Sigmoid colon (tissue), 7 donors: ENCODE measurements at regions of chr9 and their contacts with region 1.

Region 1: DNA sequence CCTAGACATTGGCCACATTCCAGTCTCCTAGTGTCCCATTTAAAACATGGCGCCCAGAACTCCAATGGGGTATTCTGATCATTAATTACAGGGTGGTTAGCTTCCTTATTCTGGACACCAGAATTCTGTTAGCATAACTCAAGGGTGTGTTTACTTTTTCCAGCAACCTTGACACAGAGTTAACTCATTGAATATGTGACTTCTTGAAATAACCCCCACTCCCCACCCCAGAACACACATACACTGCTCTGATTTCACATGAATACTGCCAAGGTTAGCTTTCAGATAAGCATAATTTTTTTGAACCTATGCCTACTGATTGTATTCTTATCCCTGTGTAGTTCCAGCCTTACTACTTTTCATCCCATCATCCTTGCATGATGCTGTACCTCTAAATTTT is 151.1 kb downstream of the SMARCA2 start:
- DNase-seq: no peak
- H3K4me3 ChIP-seq: no peak overlapping the region
- H3K27ac ChIP-seq: no peak overlapping the region
- H3K4me1 ChIP-seq: no peaks in the 10 kb centered on the region
- H3K27me3 ChIP-seq: no peaks in the 10 kb centered on the region
- CTCF ChIP-seq: no peak
- EP300 ChIP-seq: no peak
- POLR2A ChIP-seq: no peak

Region 2: DNA sequence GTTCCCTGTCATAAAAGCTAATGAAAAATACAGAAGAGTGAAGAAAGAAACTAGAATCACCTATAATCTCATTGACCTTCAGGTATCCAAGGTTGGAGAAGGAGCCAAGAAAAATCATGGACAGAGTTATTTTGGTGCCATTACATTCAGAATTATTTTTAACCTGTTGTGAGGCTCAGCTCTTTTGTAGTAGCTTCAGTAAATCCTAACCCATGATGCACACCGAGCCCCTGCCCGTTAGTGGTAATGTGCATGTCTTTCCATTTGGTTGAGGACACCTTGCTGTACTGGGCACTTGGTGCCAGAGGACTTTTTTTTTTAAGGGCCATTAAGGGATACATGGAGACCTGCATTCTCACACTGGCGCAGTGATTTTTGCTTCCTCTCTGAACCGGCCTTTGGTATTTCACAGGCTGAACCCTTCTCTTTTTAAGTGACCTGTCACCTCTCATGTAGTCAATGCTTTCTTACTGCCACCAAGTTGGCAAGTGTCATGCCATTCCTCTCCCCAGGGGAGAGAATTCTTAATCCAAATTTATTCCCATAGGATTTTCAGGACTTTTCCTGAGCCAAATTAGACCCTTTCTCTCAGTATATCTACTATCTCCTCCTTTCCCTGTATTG is 25.5 kb before region 1 on chr9:
- intact Hi-C with region 1: loop called (anchors 2 kb)
- DNase-seq: no peak
- H3K4me3 ChIP-seq: no peak overlapping the region
- H3K27ac ChIP-seq: no peak overlapping the region
- H3K4me1 ChIP-seq: peaks cover 0 to 6% (median 0%) of the 10 kb centered on the region in 4 donors
- H3K27me3 ChIP-seq: no peaks in the 10 kb centered on the region
- CTCF ChIP-seq: no peak
- EP300 ChIP-seq: no peak
- POLR2A ChIP-seq: no peak